Activated CD4-positive, alpha-beta T cell treated with anti-CD3 and anti-CD28 coated beads, Interleukin-2, amount 10 ng/mL, durations not matched to agents 24 days and 14 days (primary cell): ENCODE measurements at regions of chr2 and their contacts with region 1.

Region 1: GRCh38 chr2:98634401-98635092 is 26.2 kb downstream of the UNC50 start:
- DNase-seq: peak; percentile 80
- H3K4me3 Mint-ChIP-seq: peak overlapping the region; percentile 42
- H3K27ac Mint-ChIP-seq: peak overlapping the region; percentile 82
- H3K4me1 Mint-ChIP-seq: peaks cover 30% of the 10 kb centered on the region
- H3K27me3 Mint-ChIP-seq: no peaks in the 10 kb centered on the region

Region 2: GRCh38 chr2:98649135-98649991 is 14.8 kb after region 1 on chr2:
- intact Hi-C with region 1: loop called (anchors 1 kb)
- DNase-seq: peak; percentile 94
- H3K4me3 Mint-ChIP-seq: no peak overlapping the region
- H3K27ac Mint-ChIP-seq: peak overlapping the region; percentile 48
- H3K4me1 Mint-ChIP-seq: peaks cover 47% of the 10 kb centered on the region
- H3K27me3 Mint-ChIP-seq: no peaks in the 10 kb centered on the region